ENCODE measurements at regions of chr16 and their contacts with region 1.

Region 1: GRCh38 chr16:66751303-66751991 is at the start of gene DYNC1LI2:
- DNase-seq: peak; percentile 68 to 87 (median 83)
- H3K4me3 ChIP-seq: peak within 1 kb of the TSS; percentile 83
- H3K4me3 Mint-ChIP-seq: peak within 1 kb of the TSS; percentile 85 to 96 (median 92)
- H3K27ac ChIP-seq: peak within 1 kb of the TSS; percentile 80
- H3K27ac Mint-ChIP-seq: peak within 1 kb of the TSS; percentile 81 to 98 (median 90)
- H3K4me1 ChIP-seq: peaks cover 31% of the 10 kb centered on the region
- H3K4me1 Mint-ChIP-seq: peaks cover 38 to 49% (median 44%) of the 10 kb centered on the region in 3 donors
- H3K27me3 ChIP-seq: no peaks in the 10 kb centered on the region
- H3K27me3 Mint-ChIP-seq: peaks cover 8 to 14% of the 10 kb centered on the region in 2 donors
- total RNA-seq, gene DYNC1LI2: 50.5 to 53.8 TPM

Region 2: GRCh38 chr16:66427036-66427860 is 324.2 kb before region 1 on chr16 and contains the start of gene BEAN1:
- CTCF ChIA-PET with region 1: no interaction called
- POLR2A ChIA-PET with region 1: no interaction called
- DNase-seq: no peak
- H3K4me3 ChIP-seq: peak within 1 kb of the TSS; percentile 15
- H3K4me3 Mint-ChIP-seq: peak within 1 kb of the TSS; percentile 51 to 74 (median 62)
- H3K27ac ChIP-seq: no peak within 1 kb of the TSS
- H3K27ac Mint-ChIP-seq: peak within 1 kb of the TSS in 1 of 8 donors; percentile 24
- H3K4me1 ChIP-seq: no peaks in the 10 kb centered on the region
- H3K4me1 Mint-ChIP-seq: peaks cover 0 to 18% (median 4%) of the 10 kb centered on the region in 3 donors
- H3K27me3 ChIP-seq: peaks cover 34% of the 10 kb centered on the region
- H3K27me3 Mint-ChIP-seq: peaks cover 42 to 69% of the 10 kb centered on the region in 2 donors
- total RNA-seq, gene BEAN1: not detected

Region 3: DNA sequence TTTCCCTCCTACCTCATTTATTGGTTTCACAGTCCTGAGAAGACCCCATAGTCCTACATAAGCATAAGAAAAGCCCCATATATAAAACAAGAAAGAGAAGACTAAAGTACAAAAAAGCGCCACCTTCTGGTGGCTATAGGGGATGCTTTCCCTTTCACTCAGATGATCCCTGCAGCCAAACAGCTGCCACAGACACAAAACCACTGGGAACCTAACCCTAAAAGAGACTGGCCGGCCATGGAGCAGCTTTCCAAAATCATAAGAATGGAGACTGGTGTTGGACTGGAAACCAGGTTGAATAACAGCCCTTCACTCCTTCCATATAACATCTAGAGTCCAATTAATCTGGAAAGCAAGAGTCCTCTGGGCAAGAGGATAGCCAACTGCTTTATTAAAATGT is 11.4 kb before region 1 on chr16:
- CTCF ChIA-PET with region 1: interaction called, 14 read pairs
- POLR2A ChIA-PET with region 1: no interaction called
- DNase-seq: peak in 3 of 5 donors; percentile 8 to 19 (median 10)
- H3K4me3 ChIP-seq: no peak overlapping the region
- H3K4me3 Mint-ChIP-seq: no peak overlapping the region
- H3K27ac ChIP-seq: no peak overlapping the region
- H3K27ac Mint-ChIP-seq: peak overlapping the region in 5 of 8 donors; percentile 6 to 50 (median 43)
- H3K4me1 ChIP-seq: peaks cover 4% of the 10 kb centered on the region
- H3K4me1 Mint-ChIP-seq: peaks cover 13 to 33% (median 30%) of the 10 kb centered on the region in 3 donors
- H3K27me3 ChIP-seq: no peaks in the 10 kb centered on the region
- H3K27me3 Mint-ChIP-seq: no peaks in the 10 kb centered on the region

Measured in CD8-positive, alpha-beta memory T cell (primary cell).